HEK293 (cell line): ENCODE measurements at regions of chr19 and their contacts with region 1.

Region 1: DNA sequence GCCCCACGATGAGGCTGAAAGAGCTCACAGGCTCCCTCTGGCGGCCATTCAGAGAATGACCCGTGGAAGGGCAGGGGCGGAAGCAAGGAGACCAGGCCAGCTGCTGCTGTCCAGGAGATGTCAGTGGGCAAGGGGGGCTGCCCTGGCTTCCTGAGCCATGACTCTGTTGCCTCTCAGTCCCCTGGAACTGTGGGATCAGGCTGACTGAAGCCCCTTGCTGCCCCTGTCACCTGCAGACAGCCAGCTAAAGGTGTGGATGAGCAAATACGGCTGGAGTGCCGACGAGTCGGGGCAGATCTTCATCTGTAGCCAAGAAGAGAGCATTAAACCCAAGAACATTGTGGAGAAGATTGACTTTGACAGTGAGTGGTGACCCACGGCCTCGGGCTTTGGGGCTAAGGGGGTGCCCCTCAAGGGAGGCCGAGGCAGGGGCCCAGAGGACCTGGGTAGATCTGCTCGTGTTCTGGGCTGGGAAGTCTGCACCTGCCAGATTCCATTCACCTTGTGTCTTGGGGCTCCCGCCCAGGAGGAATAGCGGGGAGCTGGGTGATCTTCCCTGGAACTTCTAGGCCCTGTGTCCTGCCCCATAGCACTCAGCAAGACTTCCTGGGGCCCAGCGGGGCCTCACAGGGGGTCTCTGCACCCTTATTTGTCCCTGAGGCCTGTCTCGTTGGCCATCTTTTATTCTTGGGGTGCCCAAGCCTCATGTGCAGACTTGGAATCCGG is 12.5 kb upstream of the ACTN4 start:
- H3K4me3 ChIP-seq: no peak overlapping the region
- H3K27ac ChIP-seq: peak overlapping the region; percentile 31; the same call in 1 of the 2 replicates
- H3K4me1 ChIP-seq: no peaks in the 10 kb centered on the region; the same call in 1 of the 2 replicates
- CTCF ChIP-seq: peak; percentile 96

Region 2: DNA sequence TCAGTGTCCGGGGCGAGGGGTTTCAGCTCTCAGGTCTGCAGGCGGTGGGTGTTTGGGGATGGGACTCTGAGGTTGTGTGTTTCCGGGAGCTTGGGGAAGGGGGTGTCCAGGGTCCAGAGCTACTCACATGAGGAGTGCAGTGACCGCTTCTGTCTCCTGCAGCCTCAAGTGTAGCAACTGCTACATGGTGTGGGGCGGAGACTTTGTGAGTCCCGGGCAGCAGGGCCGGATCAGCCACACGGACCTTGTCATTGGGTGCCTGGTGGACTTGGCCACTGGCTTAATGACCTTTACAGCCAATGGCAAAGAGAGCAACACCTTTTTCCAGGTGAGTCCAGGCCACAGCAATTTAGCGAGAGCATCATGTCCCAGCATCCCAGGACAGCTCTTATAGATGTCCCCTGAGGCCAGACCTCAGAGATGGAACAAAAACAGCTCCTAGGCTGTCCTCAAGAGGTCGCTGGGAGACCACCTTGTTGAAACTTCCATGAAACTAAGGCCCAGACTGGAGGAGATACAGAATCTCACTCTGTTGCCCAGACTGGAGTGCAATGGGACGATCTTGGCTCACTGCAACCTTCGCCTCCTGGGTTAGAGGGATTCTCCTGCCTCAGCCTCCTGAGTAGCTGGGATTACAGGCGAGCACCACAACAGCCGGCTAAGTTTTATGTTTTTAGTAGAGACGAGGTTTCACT is 156.5 kb before region 1 on chr19:
- CTCF ChIA-PET with region 1: interaction called, 28 read pairs
- POLR2A ChIA-PET with region 1: interaction called, 7 read pairs
- H3K4me3 ChIP-seq: no peak overlapping the region
- H3K27ac ChIP-seq: no peak overlapping the region
- H3K4me1 ChIP-seq: no peaks in the 10 kb centered on the region
- CTCF ChIP-seq: peak; percentile 77

Region 3: GRCh38 chr19:38488776-38489481 is 146.0 kb before region 1 on chr19:
- CTCF ChIA-PET with region 1: no interaction called
- POLR2A ChIA-PET with region 1: no interaction called
- H3K4me3 ChIP-seq: no peak overlapping the region
- H3K27ac ChIP-seq: no peak overlapping the region
- H3K4me1 ChIP-seq: no peaks in the 10 kb centered on the region
- CTCF ChIP-seq: no peak

Region 4: DNA sequence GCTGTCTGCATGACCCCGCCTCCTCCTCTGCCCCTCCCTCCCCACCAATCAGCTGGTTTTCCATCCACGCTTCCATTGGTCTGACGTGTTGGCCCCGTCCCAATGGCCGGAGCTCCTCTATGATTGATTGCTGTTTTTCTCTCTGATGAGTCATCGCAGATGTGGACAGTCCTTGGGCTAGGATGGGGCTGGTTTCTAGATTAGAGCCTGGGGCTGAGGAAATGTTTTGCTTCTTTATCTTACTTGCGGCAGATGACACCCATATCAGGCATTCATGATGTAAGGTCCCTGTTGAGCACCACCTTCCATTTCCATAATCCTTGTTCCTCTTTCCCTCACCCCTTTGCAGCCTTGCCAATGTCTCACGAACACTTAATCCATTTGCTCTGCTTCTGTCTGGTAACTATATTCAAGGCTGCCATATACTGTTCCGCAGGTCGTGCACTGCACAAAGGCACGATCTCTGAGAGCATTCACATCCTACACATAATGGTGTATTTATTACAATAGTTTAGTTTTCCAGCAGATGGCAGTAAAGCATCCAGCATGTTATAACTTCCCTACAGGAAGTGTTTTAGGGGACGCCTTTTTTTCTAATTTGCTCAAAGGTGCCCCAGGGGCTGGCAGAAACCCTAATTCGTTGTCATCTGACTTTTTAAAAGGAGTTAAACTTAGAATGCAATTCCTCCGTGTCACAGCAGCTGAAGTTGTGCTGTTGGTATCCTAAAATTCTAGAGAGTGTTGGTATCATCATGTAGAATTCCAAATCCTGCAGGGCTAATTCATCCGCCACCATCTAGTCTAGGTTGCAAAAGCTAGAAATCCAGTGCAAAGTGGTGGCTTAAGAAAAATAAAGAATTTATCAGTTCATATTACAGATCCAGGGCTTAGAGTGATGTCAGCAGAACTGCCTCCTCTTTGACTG is 90.6 kb before region 1 on chr19:
- CTCF ChIA-PET with region 1: interaction called, 95 read pairs
- POLR2A ChIA-PET with region 1: interaction called, 11 read pairs
- H3K4me3 ChIP-seq: peak overlapping the region; percentile 37
- H3K27ac ChIP-seq: peak overlapping the region; percentile 19
- H3K4me1 ChIP-seq: peaks cover 11% of the 10 kb centered on the region
- CTCF ChIP-seq: peak; percentile 90

Region 5: GRCh38 chr19:38647368-38647965 is 12.5 kb after region 1 on chr19 and contains the start of gene ACTN4:
- CTCF ChIA-PET with region 1: interaction called, 85 read pairs
- POLR2A ChIA-PET with region 1: interaction called, 15 read pairs
- H3K4me3 ChIP-seq: peak within 1 kb of the TSS; percentile 84
- H3K27ac ChIP-seq: peak within 1 kb of the TSS; percentile 96
- H3K4me1 ChIP-seq: peaks cover 37% of the 10 kb centered on the region
- CTCF ChIP-seq: peak; percentile 52; the same call in 1 of the 2 replicates

Region 6: DNA sequence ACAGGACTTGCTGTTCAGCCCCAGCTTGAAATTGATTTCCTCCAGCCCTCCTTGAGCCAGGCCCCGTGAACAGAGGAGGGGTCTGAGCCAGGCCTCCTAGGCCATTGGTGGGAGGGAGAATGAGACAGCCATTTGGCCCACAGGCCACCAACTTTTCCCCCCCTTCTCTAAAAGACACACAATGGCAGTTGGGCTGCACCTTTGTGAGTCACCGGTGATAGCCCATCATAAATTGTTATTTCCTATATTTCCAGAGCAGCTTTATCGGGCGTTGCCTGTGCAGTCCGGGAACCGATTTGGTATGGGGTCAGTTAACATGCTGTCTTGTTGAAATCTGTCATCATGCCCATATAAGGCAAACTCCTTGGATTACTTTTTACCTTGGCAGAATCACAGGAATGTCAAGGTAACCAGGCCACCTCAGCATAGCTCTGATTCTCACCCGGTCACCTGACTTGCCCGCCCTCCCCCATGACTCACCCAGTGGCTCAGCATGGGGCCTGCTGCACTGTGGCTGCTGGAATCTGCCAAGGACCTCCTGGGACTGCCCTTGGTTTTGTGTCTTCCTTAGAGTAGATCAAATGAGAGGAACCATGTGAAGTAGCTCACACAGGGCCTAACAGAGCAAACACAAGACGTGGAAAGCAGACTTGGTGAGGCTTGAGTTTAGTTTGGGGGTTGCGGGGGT is 48.6 kb after region 1 on chr19:
- CTCF ChIA-PET with region 1: interaction called, 10 read pairs
- POLR2A ChIA-PET with region 1: interaction called, 4 read pairs
- H3K4me3 ChIP-seq: no peak overlapping the region
- H3K27ac ChIP-seq: peak overlapping the region; percentile 98
- H3K4me1 ChIP-seq: peaks cover 41% of the 10 kb centered on the region
- CTCF ChIP-seq: no peak

Region 7: DNA sequence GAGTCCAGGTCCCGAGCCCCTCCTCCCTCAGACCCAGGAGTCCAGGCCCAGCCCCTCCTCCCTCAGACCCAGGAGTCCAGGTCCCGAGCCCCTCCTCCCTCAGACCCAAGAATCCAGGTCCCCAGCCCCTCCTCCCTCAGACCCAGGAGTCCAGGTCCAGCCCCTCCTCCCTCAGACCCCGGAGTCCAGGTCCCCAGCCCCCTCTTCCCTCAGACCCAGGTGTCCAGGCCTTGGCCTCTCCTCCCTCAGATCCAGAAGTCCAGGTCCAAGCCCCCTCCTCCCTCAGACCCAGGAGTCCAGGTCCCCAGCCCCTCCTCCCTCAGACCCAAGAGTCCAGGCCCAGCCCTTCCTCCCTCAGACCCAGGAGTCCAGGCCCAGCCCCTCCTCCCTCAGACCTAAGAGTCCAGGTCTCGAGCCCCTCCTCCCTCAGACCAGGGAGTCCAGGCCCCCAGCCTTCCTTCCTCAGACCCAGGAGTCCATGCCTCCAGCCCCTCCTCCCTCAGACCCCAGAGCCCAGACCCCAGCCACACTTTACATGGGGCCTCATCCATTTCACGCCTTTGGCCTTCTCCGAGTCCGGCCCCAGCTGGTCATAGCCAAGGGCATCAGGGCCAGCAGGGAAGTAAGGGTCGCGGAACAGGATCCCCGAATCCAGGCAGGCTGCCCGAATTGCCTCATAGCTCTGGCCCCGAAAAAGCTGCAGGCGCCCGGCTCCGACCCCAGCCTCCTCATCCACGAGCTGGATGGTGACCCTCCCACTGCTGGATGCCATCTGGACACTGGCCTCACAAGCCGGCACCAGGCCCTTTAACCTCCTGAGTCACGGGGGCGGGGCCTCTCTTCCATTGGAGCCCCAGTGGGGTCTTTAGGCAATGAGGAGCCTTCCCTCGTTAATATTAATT is 108.7 kb after region 1 on chr19:
- CTCF ChIA-PET with region 1: no interaction called
- POLR2A ChIA-PET with region 1: no interaction called
- H3K4me3 ChIP-seq: no peak overlapping the region
- H3K27ac ChIP-seq: no peak overlapping the region
- H3K4me1 ChIP-seq: no peaks in the 10 kb centered on the region; the same call in 1 of the 2 replicates
- CTCF ChIP-seq: no peak

Region 8: DNA sequence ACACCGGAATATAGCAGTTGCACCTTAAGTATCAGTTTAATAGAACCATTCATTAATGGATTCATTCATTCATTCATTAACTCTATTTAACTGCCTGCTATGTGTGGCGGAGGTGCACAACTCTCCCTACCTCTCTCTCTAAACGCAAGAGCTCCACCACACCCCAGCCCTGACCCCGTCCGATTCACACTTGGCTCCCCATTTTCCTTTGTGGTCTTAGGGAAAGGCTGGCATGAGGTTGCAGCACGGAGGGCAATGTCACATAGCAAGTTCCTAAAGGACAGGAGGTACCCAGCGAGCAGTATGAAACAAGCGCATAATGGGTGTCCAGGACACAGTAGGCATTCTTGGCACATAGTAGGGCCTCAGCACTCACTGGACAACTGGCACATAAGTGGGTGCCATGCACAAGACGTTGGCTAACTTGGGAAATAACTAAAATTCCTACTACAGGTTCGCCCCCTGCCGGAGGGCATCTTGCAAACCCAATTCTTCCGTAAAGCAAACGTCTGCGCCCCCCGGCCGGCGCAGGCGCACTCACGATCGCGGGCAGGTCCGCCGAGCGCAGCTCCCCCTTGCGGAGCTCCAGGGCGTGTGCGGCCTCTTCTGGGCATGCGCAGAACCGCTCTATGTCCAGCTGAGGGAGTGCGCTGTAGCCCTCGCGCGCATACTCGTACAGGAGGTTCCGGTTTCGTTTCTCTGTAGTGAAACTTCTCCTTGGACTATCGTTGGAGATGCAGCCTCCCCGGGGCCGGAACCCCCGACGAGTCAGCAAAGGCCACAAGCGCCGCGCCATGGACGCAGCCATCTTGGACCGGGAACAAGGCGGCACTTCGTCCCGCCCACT is 295.2 kb after region 1 on chr19 and contains the start of gene SARS2:
- CTCF ChIA-PET with region 1: interaction called, 29 read pairs
- POLR2A ChIA-PET with region 1: no interaction called
- H3K4me3 ChIP-seq: peak within 1 kb of the TSS; percentile 70
- H3K27ac ChIP-seq: peak within 1 kb of the TSS; percentile 81
- H3K4me1 ChIP-seq: peaks cover 10% of the 10 kb centered on the region; the same call in 1 of the 2 replicates
- CTCF ChIP-seq: peak; percentile 100